Right lobe of liver (tissue), 6 donors: ENCODE measurements at regions of chr5 and their contacts with region 1.

Region 1: GRCh38 chr5:181052672-181053487 is 12.8 kb downstream of the BTNL9 start:
- DNase-seq: peak in 1 of 3 donors; percentile 30
- ATAC-seq: peak; percentile 24 to 53 (median 39)
- H3K4me3 ChIP-seq: peak overlapping the region; percentile 34 to 46 (median 34)
- H3K27ac ChIP-seq: no peak overlapping the region
- H3K4me1 ChIP-seq: peaks cover 0 to 14% (median 0%) of the 10 kb centered on the region in 4 donors
- H3K27me3 ChIP-seq: peaks cover 0 to 30% of the 10 kb centered on the region in 2 donors
- CTCF ChIP-seq: no peak
- POLR2A ChIP-seq: no peak

Region 2: DNA sequence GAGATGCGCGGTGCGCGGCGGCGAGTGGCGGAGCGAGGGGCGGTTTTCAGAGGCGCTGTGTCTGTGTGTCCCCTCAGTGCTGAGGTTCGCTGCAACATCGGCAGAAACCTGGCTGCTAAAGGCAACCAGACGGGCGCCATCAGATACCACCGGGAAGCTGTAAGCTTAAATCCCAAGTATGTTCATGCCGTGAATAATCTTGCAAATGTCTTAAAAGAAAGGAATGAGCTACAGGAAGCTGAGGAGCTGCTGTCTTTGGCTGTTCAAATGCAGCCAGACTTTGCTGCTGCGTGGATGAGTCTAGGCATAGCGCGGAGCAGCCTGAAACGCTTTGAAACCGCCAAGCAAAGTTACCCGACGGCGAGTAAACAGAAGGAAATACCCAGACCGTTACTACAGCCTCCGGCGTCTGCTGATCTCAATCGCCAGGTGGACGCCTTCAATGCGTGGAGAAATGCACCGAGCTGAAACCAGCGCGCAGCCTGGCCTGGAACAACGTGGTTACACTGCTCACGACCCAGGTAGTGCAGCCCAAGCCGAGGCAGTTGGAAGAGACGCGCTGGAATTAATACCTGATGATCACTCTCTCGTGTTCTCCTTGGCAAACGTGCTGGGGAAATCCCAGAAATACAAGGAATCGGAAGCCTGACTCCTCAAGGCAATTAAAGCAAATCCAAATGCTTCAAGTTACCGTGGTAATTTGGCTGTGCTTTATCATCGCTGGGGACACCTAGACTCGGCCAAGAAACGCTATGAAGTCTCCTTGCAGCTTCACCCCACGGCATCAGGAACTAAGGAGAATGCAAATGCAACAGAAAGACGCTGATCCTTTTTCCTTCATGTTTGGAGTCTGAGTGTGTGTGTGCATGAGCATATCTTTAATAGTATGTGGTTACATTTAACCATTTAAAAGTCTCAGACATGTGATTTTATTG is 62.2 kb after region 1 on chr5:
- intact Hi-C with region 1: loop called in 1 of 2 experiments (anchors 10 kb)
- DNase-seq: peak in 1 of 3 donors; percentile 34
- ATAC-seq: peak in 1 of 4 donors; percentile 36
- H3K4me3 ChIP-seq: no peak overlapping the region
- H3K27ac ChIP-seq: no peak overlapping the region
- H3K4me1 ChIP-seq: no peaks in the 10 kb centered on the region
- H3K27me3 ChIP-seq: peaks cover 0 to 5% of the 10 kb centered on the region in 2 donors
- CTCF ChIP-seq: no peak
- POLR2A ChIP-seq: no peak